ENCODE measurements at regions of chr12 and their contacts with region 1.

Region 1: GRCh38 chr12:122902854-122903692 is 7.1 kb upstream of the VPS37B start:
- DNase-seq: no peak
- ATAC-seq: no peak
- H3K4me3 ChIP-seq: no peak overlapping the region
- H3K27ac ChIP-seq: no peak overlapping the region
- H3K4me1 ChIP-seq: peaks cover 35% of the 10 kb centered on the region
- H3K27me3 ChIP-seq: no peaks in the 10 kb centered on the region
- CTCF ChIP-seq: no peak
- EP300 ChIP-seq: no peak
- POLR2A ChIP-seq: no peak
- RAD21 ChIP-seq: no peak

Region 2: DNA sequence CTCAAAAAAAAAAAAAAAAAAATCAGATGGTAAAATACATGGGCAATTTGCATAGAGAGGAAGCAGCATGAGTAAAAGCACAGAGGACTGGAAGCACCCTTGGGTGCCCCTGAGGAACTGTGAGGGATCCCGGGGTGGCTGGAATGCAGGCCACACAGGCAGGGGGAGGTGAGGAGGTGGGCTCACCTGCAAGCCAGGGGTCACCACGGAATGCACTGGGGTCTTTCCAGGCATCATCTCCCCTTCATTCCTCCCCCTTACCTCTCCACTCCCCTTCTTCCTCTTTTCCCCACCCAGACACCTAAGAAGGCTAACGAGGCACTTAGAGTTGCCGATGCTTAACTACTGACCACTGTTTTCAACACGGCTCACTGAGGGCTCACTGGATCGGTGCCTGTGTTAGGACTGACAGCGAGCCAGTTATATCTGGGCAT is 82.2 kb before region 1 on chr12:
- CTCF ChIA-PET with region 1: no interaction called
- POLR2A ChIA-PET with region 1: no interaction called
- RAD21 ChIA-PET with region 1: no interaction called
- SMC1A ChIA-PET with region 1: no interaction called
- in situ Hi-C with region 1: no loop called
- intact Hi-C with region 1: no loop called
- DNase-seq: no peak
- ATAC-seq: peak; percentile 91
- H3K4me3 ChIP-seq: 0 out of 2 replicates have a peak overlapping the region, but pooled peaks have one; percentile 9
- H3K27ac ChIP-seq: no peak overlapping the region
- H3K4me1 ChIP-seq: peaks cover 7% of the 10 kb centered on the region
- H3K27me3 ChIP-seq: peaks cover 0 to 2% of the 10 kb centered on the region in 2 experiments; a peak in 1 of 4 replicates
- CTCF ChIP-seq: no peak
- EP300 ChIP-seq: no peak
- POLR2A ChIP-seq: no peak
- RAD21 ChIP-seq: no peak

Region 3: GRCh38 chr12:122871851-122872780 is 31.0 kb before region 1 on chr12:
- CTCF ChIA-PET with region 1: interaction called, 107 read pairs
- POLR2A ChIA-PET with region 1: interaction called, 6 read pairs
- RAD21 ChIA-PET with region 1: interaction called, 17 read pairs
- SMC1A ChIA-PET with region 1: interaction called, 18 read pairs
- in situ Hi-C with region 1: no loop called
- intact Hi-C with region 1: no loop called
- DNase-seq: peak; percentile 52
- ATAC-seq: peak; percentile 52
- H3K4me3 ChIP-seq: peak overlapping the region; percentile 57; the same call in 1 of the 2 replicates
- H3K27ac ChIP-seq: peak overlapping the region; percentile 64
- H3K4me1 ChIP-seq: peaks cover 45% of the 10 kb centered on the region
- H3K27me3 ChIP-seq: no peaks in the 10 kb centered on the region
- CTCF ChIP-seq: no peak
- EP300 ChIP-seq: no peak
- POLR2A ChIP-seq: 0 out of 2 replicates have a peak, but pooled peaks have one; percentile 17
- RAD21 ChIP-seq: no peak

Region 4: GRCh38 chr12:122880668-122881067 is 22.4 kb before region 1 on chr12:
- CTCF ChIA-PET with region 1: interaction called, 107 read pairs
- POLR2A ChIA-PET with region 1: interaction called, 6 read pairs
- RAD21 ChIA-PET with region 1: interaction called, 3 read pairs
- SMC1A ChIA-PET with region 1: interaction called, 11 read pairs
- in situ Hi-C with region 1: no loop called
- intact Hi-C with region 1: no loop called
- DNase-seq: no peak
- ATAC-seq: peak; percentile 60
- H3K4me3 ChIP-seq: no peak overlapping the region
- H3K27ac ChIP-seq: no peak overlapping the region
- H3K4me1 ChIP-seq: peaks cover 25% of the 10 kb centered on the region
- H3K27me3 ChIP-seq: no peaks in the 10 kb centered on the region; a peak in 1 of 4 replicates
- CTCF ChIP-seq: peak; percentile 43; a peak in 5 of 6 replicates
- EP300 ChIP-seq: no peak
- POLR2A ChIP-seq: no peak
- RAD21 ChIP-seq: peak; percentile 52

Region 5: DNA sequence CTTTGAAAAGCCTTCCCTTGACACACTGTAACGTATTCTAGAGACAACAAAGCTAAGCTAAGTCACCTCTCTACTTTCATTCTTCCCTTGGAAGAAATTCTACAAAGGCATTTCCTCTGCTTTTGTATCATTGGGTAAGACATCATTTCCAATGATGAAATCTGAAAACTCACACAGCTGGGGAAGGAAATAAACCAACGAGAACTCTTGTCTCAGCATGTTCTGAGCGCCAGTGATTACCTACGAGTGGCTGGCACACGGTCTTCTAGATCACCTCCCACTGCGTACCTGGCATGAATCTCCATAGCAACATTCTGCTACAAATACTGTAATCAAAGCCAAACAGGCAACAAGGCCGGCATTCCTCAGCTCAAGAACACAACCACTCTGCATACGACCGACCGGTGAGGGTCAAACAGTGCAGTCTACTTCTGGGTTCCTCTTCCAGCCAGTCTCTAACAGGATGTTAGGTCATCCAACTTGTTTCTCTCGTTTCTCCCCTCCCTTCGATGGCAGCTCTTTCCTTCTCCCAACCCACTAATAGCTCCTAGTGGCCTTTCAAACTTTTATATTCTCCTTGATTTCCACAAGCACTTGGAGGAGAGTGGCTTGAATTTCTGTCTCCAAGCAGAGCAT is 14.7 kb before region 1 on chr12:
- CTCF ChIA-PET with region 1: interaction called, 107 read pairs
- POLR2A ChIA-PET with region 1: interaction called, 21 read pairs
- RAD21 ChIA-PET with region 1: interaction called, 15 read pairs
- SMC1A ChIA-PET with region 1: interaction called, 52 read pairs
- in situ Hi-C with region 1: no loop called
- intact Hi-C with region 1: loop called (anchors 1 kb)
- DNase-seq: no peak
- ATAC-seq: peak; percentile 63
- H3K4me3 ChIP-seq: peak overlapping the region; percentile 51
- H3K27ac ChIP-seq: peak overlapping the region; percentile 71
- H3K4me1 ChIP-seq: peaks cover 36% of the 10 kb centered on the region
- H3K27me3 ChIP-seq: no peaks in the 10 kb centered on the region
- CTCF ChIP-seq: no peak
- EP300 ChIP-seq: no peak
- POLR2A ChIP-seq: peak; percentile 48
- RAD21 ChIP-seq: no peak

Region 6: GRCh38 chr12:122928404-122929147 is 25.5 kb after region 1 on chr12:
- CTCF ChIA-PET with region 1: interaction called, 4 read pairs
- POLR2A ChIA-PET with region 1: interaction called, 10 read pairs
- RAD21 ChIA-PET with region 1: interaction called, 9 read pairs
- SMC1A ChIA-PET with region 1: interaction called, 14 read pairs
- in situ Hi-C with region 1: no loop called
- intact Hi-C with region 1: no loop called
- DNase-seq: no peak
- ATAC-seq: no peak
- H3K4me3 ChIP-seq: no peak overlapping the region
- H3K27ac ChIP-seq: no peak overlapping the region
- H3K4me1 ChIP-seq: peaks cover 32% of the 10 kb centered on the region
- H3K27me3 ChIP-seq: no peaks in the 10 kb centered on the region
- CTCF ChIP-seq: no peak
- EP300 ChIP-seq: no peak
- POLR2A ChIP-seq: no peak
- RAD21 ChIP-seq: no peak

Region 7: DNA sequence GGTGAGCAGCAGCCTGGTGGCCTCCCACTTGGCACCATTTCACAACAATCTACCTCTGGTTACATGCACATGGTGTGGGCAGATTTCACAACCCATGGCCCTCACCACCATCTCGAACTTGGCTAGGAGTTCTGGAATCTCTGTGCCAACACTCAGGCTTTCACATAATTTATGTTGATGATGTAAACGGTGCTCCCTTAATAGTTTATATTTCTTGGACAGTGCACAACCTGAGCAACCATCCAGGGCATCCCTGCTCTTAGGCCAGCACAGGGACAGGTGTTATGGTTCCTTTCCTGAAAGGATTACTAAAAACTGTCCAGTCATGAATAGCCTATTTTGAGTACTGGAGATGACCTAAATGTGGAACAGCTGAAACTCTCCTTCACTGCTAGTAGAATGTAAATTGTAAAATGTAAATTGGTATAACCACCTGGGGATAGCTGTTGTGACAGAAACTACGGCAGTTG is 34.6 kb after region 1 on chr12:
- CTCF ChIA-PET with region 1: no interaction called
- POLR2A ChIA-PET with region 1: interaction called, 3 read pairs
- RAD21 ChIA-PET with region 1: interaction called, 7 read pairs
- SMC1A ChIA-PET with region 1: interaction called, 6 read pairs
- in situ Hi-C with region 1: no loop called
- intact Hi-C with region 1: loop called (anchors 2 kb)
- DNase-seq: no peak
- ATAC-seq: peak; percentile 56
- H3K4me3 ChIP-seq: no peak overlapping the region
- H3K27ac ChIP-seq: no peak overlapping the region
- H3K4me1 ChIP-seq: peaks cover 38% of the 10 kb centered on the region
- H3K27me3 ChIP-seq: no peaks in the 10 kb centered on the region
- CTCF ChIP-seq: no peak
- EP300 ChIP-seq: no peak
- POLR2A ChIP-seq: no peak
- RAD21 ChIP-seq: no peak

Region 8: DNA sequence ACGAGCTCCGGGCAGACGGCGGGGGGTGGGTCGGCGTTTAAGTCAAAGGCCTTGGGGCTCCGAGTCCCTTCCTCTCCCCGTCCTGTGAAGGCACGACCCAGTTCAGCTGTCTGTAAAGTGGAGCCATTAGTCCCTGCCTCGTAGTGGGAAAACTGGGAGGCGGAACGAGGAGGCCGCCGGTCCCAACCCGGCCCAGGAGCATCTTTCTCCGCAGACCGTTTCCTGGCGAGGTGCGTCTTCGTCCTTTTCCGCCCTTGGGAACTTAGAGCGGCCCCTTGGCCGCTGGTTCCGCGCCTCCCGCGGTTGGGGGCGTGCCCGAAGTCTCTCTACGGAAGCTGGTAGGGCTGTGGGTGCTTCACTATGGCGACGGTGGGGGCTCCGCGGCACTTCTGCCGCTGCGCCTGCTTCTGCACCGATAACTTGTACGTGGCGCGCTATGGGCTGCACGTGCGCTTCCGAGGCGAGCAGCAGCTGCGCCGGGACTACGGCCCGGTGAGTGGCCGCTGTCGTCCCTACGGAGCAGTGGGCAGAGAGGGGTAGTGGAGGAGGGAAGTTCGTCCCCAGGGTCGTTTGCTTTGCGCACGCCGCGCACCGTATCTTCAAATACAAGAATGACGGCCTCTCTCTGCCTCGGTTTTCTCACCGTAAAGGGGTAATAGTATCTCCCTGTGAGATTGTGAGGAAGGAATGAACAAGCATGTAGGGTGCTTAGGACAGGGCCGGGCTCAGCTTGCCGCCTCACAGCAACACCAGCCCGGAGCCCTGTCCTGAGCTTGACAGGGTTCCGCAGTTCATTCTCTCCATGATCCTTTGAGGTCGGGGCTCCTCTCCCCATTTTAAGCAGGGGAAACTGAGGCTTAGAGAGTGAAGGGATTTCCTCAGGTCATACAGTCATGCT is 72.1 kb after region 1 on chr12 and contains the start of gene OGFOD2:
- CTCF ChIA-PET with region 1: no interaction called
- POLR2A ChIA-PET with region 1: no interaction called
- RAD21 ChIA-PET with region 1: no interaction called
- SMC1A ChIA-PET with region 1: no interaction called
- in situ Hi-C with region 1: no loop called
- intact Hi-C with region 1: no loop called
- DNase-seq: peak; percentile 60
- ATAC-seq: peak; percentile 90
- H3K4me3 ChIP-seq: peak within 1 kb of the TSS; percentile 84
- H3K27ac ChIP-seq: peak within 1 kb of the TSS; percentile 99
- H3K4me1 ChIP-seq: peaks cover 20% of the 10 kb centered on the region
- H3K27me3 ChIP-seq: no peaks in the 10 kb centered on the region
- CTCF ChIP-seq: no peak
- EP300 ChIP-seq: peak in 1 of 2 experiments; percentile 31; a peak in 1 of 4 replicates
- POLR2A ChIP-seq: peak; percentile 75
- RAD21 ChIP-seq: no peak
- polyA plus RNA-seq, gene OGFOD2: 0.93 to 1.8 TPM

Measured in GM12878 (cell line).